ENCODE measurements at regions of chrX and their contacts with region 1.

Region 1: DNA sequence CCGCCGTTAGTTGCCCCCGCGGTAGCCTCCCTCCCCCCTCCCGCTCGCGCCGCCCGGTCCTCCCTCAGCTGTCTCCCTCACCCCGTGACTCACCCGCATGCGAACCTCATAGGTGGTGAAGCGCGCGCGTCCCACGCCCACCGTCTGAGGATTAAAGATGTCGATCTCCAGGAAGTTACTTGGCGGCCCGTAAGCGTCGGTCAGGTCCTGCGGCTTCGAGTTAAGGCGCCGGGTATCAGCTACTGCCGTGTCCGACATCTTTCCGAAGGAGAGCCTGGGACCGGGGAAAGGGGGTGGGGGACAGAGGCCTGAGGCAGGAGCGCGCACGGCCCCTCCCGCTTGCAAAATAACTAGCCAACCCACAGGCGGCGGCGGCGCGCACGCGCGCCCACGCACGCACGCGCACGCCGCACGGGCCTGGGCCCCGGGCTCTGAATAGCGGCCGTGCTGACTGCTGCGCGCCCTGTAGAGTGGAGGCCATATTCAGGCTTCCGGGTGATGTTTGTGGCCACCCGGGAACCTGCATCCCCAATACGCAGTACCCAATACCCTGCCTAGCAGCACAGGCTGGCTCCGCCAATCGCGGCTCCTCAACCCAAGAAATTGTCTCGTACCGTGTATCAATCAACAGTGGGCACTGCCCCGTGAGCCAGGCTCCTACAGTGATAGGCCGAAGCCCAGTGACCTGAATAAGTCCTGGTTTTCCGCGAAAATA is at the start of gene SNX12:
- DNase-seq: peak; percentile 74 to 96 (median 93)
- H3K4me3 ChIP-seq: peak within 1 kb of the TSS; percentile 31 to 77 (median 65)
- H3K27ac ChIP-seq: peak within 1 kb of the TSS in 57 of 59 donors; percentile 35 to 91 (median 82)
- H3K27me3 ChIP-seq: peaks cover 0 to 45% (median 8%) of the 10 kb centered on the region in 45 donors
- CTCF ChIP-seq: peak in 3 of 56 donors; percentile 8 to 21 (median 10)
- total RNA-seq, gene SNX12: 54.7 to 97.1 (median 74.9) TPM

Region 2: DNA sequence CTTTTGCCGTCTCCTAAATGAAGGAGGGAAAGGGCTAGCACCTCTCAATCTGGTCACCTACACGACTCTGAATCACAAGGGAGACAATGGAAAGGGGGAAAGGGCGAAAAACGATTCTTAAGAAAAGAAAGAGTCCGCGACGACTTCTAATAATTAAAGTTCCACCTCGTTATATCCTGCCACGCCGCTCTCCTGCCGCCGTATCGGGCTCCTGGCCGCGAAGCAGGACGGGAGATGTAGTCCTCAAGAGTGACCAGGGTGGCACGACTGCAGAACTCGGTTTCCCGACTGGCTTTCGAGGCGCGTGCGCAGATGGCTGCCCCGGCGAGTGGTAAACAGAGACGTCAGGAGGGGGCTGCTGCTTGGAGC is 27.3 kb after region 1 on chrX and contains the start of gene FOXO4:
- intact Hi-C with region 1: loop called (anchors 1 to 2 kb)
- DNase-seq: peak; percentile 90 to 96 (median 94)
- H3K4me3 ChIP-seq: peak within 1 kb of the TSS; percentile 45 to 77 (median 65)
- H3K27ac ChIP-seq: peak within 1 kb of the TSS in 53 of 59 donors; percentile 1 to 84 (median 67)
- H3K27me3 ChIP-seq: peaks cover 0 to 67% (median 17%) of the 10 kb centered on the region in 45 donors
- CTCF ChIP-seq: peak in 3 of 56 donors; percentile 9 to 17 (median 12)
- total RNA-seq, gene FOXO4: 35.9 to 223 (median 67.8) TPM

Region 3: DNA sequence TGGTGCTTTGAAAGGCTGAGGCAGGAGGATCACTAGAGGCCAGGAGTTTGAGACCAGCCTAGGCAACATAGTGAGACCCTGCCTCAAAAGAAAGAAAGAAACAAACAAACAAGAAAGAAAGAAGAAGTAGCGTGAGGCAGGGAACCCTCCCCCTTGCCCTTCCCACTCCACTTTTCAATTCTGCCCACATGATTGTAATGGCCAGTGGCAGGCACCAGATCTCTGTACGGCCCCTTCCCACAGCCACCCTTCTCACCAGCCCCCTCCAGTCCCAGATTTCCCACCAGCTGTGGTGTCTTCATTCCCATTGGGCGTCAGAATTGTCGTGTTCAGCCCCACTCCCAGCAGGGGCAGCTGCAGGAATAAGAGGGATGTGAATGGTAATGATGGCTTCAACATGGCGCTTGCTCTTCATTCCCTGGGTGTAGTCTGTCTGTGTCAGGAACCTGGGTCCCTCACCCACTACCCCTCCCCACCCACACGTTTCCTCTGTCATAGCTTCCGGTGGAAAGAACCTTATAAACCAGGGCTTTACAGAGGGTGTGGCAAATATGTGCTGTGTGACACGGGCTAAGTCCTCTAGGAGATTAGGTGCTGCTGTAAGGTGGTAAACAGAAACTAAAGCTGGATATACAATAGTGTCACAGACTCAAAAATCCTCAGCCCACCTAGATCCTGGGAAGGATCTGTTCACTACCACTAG is 43.1 kb after region 1 on chrX and contains the start of gene IL2RG:
- intact Hi-C with region 1: no loop called
- DNase-seq: no peak
- H3K4me3 ChIP-seq: no peak within 1 kb of the TSS
- H3K27ac ChIP-seq: no peak within 1 kb of the TSS
- H3K27me3 ChIP-seq: peaks cover 0 to 65% (median 12%) of the 10 kb centered on the region in 45 donors
- CTCF ChIP-seq: no peak
- total RNA-seq, gene IL2RG: 0.40 to 4.4 (median 1.5) TPM in 107 of 120 experiments, not detected in the others

Region 4: GRCh38 chrX:71128915-71129765 is 60.9 kb after region 1 on chrX:
- intact Hi-C with region 1: loop called (anchors 5 to 10 kb)
- DNase-seq: peak; percentile 54 to 76 (median 64)
- H3K4me3 ChIP-seq: no peak overlapping the region
- H3K27ac ChIP-seq: peak overlapping the region in 16 of 59 donors; percentile 10 to 63 (median 40)
- H3K27me3 ChIP-seq: peaks cover 0 to 51% (median 4%) of the 10 kb centered on the region in 45 donors
- CTCF ChIP-seq: peak in 55 of 56 donors; percentile 45 to 78 (median 68)

Region 5: DNA sequence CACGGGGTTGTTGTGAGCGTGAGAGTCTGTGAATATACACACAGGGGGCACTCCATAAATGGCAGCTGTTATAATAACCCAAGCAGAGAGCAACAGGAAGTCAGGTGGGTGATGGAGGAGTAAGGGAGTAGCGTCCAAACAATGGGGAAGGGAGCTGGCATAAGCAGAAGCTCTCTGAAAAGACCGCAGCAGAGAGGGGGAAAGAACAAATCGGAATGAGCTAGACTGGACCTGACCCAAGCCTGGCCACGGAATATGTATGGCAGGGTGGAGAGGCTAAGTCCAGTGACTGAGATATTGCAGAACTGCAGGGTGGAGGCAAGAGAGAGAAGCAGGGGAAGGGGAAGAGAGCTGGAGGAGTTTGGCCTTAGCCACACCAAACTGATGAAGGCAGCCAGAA is 148.3 kb after region 1 on chrX:
- intact Hi-C with region 1: no loop called
- DNase-seq: no peak
- H3K4me3 ChIP-seq: no peak overlapping the region
- H3K27ac ChIP-seq: no peak overlapping the region
- H3K27me3 ChIP-seq: peaks cover 0 to 69% (median 19%) of the 10 kb centered on the region in 45 donors
- CTCF ChIP-seq: no peak